T-cell (primary cell): ENCODE measurements at regions of chr1 and their contacts with region 1.

Region 1: DNA sequence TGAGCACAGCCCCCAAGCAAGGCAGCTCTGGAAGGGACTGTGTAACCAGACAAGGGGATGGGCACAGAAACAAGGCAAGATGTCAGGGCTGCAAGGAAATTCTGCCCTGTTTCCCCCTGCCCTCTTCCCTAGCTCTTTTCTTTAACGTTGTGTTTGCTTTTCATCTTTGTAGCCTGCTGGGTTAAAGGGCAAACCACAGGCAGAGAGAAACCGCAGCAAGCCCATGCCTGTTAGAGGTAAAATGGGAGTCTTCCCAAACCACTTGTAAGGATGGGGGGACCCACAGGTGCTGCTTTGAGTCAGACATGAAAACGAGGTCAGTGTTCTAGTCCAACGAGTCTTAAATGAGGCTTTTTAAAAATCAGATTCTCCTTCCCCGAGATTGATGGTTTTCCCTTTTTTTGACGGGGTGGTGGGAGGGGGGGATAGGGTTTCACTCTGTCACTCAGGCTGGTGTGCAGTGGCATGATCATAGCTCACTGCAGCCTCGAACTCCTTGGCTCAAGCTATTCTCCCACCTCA is 13.3 kb downstream of the TGFBR3 start:
- DNase-seq: peak in 5 of 35 experiments; percentile 9 to 46 (median 14)
- ATAC-seq: peak; percentile 48 to 68 (median 58)
- H3K4me3 ChIP-seq: no peak overlapping the region
- H3K4me3 Mint-ChIP-seq: peak overlapping the region; percentile 36 to 73 (median 62)
- H3K27ac ChIP-seq: no peak overlapping the region
- H3K27ac Mint-ChIP-seq: peak overlapping the region; percentile 58 to 74
- H3K4me1 ChIP-seq: peaks cover 7 to 58% of the 10 kb centered on the region in 2 experiments
- H3K4me1 Mint-ChIP-seq: peaks cover 55 to 80% (median 57%) of the 10 kb centered on the region in 3 donors
- H3K27me3 ChIP-seq: no peaks in the 10 kb centered on the region
- H3K27me3 Mint-ChIP-seq: peaks cover 0 to 3% of the 10 kb centered on the region in 2 donors

Region 2: DNA sequence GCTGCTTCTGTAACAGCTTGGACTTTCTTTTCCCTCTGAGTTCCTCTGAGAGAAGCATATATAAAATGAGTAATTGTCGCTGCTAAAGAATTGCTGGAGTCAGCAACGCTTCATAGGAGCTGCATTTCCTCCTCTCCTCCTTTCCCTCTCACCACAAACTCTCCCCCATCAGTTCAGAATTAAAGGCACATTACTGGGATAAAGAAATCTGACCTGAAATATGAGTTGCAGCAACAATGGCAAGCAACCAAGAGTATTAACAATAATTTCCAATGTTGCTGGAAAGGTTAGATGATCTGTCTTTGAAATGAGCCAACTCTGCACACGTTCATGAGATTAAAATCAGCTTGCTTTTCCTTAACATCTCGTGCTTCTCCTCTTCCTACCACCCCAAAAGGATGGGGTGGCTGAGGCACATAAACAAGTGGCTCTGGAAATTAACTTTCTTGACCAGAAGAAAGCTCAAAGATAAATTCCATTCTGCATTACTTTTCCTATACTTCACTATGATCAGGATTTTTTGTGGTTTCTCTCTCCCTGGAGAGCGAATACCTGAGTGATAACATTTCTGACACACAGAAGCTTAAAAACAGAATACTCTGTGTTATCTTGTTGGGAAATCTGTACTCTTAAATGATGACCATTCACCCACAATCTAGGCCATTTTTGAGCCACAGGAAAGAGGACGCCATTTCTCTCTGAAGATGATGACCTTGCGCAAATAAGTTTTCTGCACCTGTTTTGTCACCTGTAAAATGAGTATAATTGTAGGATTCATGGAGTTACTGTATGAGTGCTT is 76.8 kb before region 1 on chr1:
- CTCF ChIA-PET with region 1: no interaction called
- POLR2A ChIA-PET with region 1: no interaction called
- DNase-seq: no peak
- ATAC-seq: no peak
- H3K4me3 ChIP-seq: no peak overlapping the region
- H3K4me3 Mint-ChIP-seq: no peak overlapping the region
- H3K27ac ChIP-seq: no peak overlapping the region
- H3K27ac Mint-ChIP-seq: no peak overlapping the region
- H3K4me1 ChIP-seq: peaks cover 14 to 34% of the 10 kb centered on the region in 2 experiments
- H3K4me1 Mint-ChIP-seq: peaks cover 36 to 41% (median 36%) of the 10 kb centered on the region in 3 donors
- H3K27me3 ChIP-seq: no peaks in the 10 kb centered on the region
- H3K27me3 Mint-ChIP-seq: no peaks in the 10 kb centered on the region

Region 3: DNA sequence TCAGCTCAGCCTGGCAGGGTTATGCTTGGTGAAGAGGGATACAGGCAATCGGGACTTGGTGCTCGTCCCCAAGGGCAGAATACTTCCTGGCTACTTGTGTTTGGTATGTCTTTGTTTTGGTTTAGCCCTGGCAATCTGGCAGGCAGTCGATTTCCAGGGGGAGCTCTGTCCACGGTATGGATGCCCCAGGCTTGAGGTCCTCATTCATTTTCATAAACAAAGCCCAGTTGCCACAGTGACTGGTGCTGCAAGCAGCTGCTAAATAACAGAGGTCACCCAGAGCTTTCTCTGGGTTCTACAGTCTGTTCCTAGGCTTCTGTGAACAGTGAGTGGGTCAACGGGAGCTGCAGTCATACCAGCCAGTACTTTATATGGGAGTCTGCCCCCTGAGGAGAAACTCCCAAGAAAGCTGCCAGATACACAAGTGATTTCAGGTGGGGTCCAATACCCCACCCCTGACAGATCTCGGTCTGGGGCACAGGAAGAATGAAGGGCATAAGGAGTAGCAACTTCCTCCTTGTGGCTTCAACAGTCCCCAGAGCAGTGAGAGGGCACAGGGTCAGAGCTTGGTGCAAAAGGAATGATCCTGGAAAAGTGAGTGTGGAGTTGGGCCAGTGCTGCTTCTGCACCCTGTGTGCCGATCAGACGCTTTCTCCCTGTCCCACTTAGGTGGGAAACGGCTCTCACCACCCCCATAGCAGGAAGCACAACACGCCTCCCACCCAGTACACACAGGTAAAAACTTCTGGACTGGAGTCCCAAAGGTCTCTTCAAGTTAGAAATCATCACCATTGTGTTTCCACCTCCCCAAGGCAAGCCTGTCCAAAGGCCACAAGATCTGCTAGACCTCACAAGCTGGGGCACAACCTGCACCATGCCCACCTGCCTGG is 42.1 kb before region 1 on chr1:
- CTCF ChIA-PET with region 1: no interaction called
- POLR2A ChIA-PET with region 1: no interaction called
- DNase-seq: no peak
- ATAC-seq: no peak
- H3K4me3 ChIP-seq: no peak overlapping the region
- H3K4me3 Mint-ChIP-seq: no peak overlapping the region
- H3K27ac ChIP-seq: no peak overlapping the region
- H3K27ac Mint-ChIP-seq: peak overlapping the region in 1 of 2 donors; percentile 52
- H3K4me1 ChIP-seq: peaks cover 2 to 22% of the 10 kb centered on the region in 2 experiments
- H3K4me1 Mint-ChIP-seq: peaks cover 12 to 51% (median 35%) of the 10 kb centered on the region in 3 donors
- H3K27me3 ChIP-seq: no peaks in the 10 kb centered on the region
- H3K27me3 Mint-ChIP-seq: no peaks in the 10 kb centered on the region

Region 4: DNA sequence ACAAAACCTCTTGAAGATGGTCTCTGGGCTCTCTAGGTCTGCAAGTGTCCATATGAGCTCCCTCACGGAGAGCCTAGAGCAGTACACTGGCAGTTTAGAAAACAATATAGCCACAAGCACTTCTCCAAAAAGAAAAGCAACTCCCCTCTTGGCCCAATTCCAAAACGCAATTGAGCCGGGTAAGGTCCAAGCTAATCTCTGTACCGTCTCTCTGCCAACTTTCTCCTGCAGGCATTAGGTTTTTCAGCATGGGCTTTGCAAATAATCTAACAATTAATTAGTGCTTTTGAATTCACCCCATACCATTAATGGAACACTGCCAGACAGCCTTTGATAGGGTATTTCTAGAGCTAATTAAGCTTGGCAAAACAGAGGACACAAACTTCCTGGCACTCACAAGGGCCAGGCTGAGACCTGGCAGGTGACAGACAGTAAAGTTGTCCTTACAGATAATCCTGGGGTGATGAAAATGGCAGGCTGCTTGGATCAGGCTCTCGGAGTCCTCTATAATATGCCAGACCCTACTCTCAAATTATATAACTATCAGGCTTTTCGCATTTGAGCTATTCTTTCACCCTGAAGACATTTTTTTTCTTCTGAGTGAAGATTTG is 26.5 kb before region 1 on chr1:
- CTCF ChIA-PET with region 1: interaction called in 1 of 2 experiments, 10 read pairs
- POLR2A ChIA-PET with region 1: no interaction called
- DNase-seq: no peak
- ATAC-seq: no peak
- H3K4me3 ChIP-seq: no peak overlapping the region
- H3K4me3 Mint-ChIP-seq: no peak overlapping the region
- H3K27ac ChIP-seq: no peak overlapping the region
- H3K27ac Mint-ChIP-seq: no peak overlapping the region
- H3K4me1 ChIP-seq: peaks cover 0 to 12% of the 10 kb centered on the region in 2 experiments
- H3K4me1 Mint-ChIP-seq: peaks cover 19 to 75% (median 37%) of the 10 kb centered on the region in 3 donors
- H3K27me3 ChIP-seq: no peaks in the 10 kb centered on the region
- H3K27me3 Mint-ChIP-seq: no peaks in the 10 kb centered on the region

Region 5: GRCh38 chr1:91948501-91949355 is 76.1 kb after region 1 on chr1:
- CTCF ChIA-PET with region 1: no interaction called
- POLR2A ChIA-PET with region 1: no interaction called
- DNase-seq: peak; percentile 11 to 87 (median 53)
- ATAC-seq: peak; percentile 64 to 88 (median 83)
- H3K4me3 ChIP-seq: peak overlapping the region in 1 of 2 donors; percentile 34
- H3K4me3 Mint-ChIP-seq: peak overlapping the region; percentile 52 to 73 (median 70)
- H3K27ac ChIP-seq: peak overlapping the region; percentile 91
- H3K27ac Mint-ChIP-seq: peak overlapping the region; percentile 94 to 95
- H3K4me1 ChIP-seq: peaks cover 0 to 27% of the 10 kb centered on the region in 2 experiments
- H3K4me1 Mint-ChIP-seq: peaks cover 17 to 18% (median 18%) of the 10 kb centered on the region in 3 donors
- H3K27me3 ChIP-seq: no peaks in the 10 kb centered on the region
- H3K27me3 Mint-ChIP-seq: no peaks in the 10 kb centered on the region